ENCODE measurements at regions of chr1 and their contacts with region 1.

Region 1: DNA sequence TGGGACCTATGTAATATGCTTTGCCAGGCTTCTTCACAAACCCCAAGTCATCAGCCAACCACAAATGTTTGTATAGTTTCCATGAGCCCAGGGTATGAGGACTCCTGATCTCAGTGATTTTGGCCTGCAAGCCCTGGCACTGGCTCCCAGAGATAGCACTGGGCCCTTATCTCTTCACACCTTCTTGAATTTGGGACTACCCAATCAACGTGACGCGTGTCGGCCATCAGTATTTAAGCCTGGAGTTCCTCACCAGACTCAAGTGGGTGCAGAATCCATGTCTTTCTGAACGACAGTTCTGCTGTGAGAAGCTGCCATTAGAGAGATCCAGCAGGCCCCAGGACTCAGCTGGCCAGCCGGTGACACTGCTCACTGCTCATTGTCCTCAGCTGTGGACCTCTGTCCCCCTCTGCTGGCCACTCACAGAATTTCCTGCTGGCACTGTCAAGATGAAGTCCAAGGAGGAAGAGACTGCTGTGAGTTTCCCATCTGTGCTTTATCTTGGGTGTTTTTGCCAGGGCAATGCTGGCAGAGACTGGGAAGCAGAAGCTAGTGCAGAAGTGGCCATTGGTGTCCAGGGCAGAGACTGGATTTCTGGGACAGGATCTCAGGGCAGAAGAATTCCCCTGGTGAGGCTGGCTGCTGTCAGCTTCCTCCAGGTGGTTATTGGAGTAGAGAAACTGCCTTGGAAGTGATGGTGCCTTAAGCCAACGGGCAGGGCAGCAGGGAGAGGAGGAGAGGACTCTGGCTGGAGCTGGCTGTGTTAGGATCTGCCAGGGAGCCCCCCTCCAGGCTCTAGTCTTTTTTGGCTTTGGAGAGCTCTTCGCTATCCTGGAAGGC is 28.4 kb downstream of the TMCC2 start:
- DNase-seq: peak; percentile 74
- H3K4me3 Mint-ChIP-seq: no peak overlapping the region
- H3K27ac Mint-ChIP-seq: no peak overlapping the region
- H3K4me1 Mint-ChIP-seq: peaks cover 25% of the 10 kb centered on the region
- H3K27me3 Mint-ChIP-seq: no peaks in the 10 kb centered on the region

Region 2: GRCh38 chr1:204975570-204976235 is 280.5 kb before region 1 on chr1:
- intact Hi-C with region 1: loop called (anchors 1 kb)
- DNase-seq: peak; percentile 9
- H3K4me3 Mint-ChIP-seq: no peak overlapping the region
- H3K27ac Mint-ChIP-seq: no peak overlapping the region
- H3K4me1 Mint-ChIP-seq: no peaks in the 10 kb centered on the region
- H3K27me3 Mint-ChIP-seq: peaks cover 14% of the 10 kb centered on the region

Region 3: DNA sequence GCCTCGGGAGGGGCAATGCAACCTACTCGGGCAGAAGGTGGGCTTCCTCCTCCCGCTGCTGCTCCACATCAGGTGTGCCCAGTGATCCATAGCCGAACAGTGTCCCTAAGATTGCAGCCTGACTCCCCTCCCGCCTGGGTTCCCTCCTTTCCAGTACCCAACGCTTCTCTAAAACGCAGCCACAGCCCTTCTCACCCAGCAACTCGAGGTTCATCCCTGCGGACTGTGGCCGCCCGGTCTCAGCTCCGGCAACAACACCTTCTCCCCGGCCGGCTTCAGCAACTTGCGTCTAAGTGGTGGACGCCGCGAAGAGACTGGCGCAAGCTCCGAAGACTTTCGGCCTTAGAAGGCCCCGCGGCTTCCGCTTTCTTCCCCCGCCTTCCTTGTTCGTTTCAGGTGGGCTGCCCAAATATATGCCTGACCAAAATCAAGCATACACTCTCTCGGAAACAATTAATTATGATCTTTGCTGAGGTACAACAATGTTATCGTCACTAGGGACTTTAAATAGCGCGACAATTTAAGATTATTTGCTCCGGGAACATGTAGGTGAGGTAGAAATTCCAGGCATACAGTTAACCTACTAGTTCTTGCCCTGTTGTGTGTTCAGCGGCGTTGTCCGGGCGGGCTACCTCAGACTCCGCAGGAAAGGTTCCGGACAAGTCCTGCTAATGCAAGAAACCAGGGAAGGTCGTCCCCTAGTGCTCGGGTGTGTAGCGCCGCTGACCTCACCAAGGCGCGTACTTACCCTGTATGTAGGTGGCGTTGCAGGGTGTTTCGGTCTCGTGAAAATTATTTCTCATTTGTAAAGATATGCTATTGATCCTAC is 134.3 kb before region 1 on chr1 and contains the start of gene RBBP5:
- intact Hi-C with region 1: loop called (anchors 1 kb)
- DNase-seq: peak; percentile 92
- H3K4me3 Mint-ChIP-seq: peak within 1 kb of the TSS; percentile 98
- H3K27ac Mint-ChIP-seq: peak within 1 kb of the TSS; percentile 98
- H3K4me1 Mint-ChIP-seq: peaks cover 39% of the 10 kb centered on the region
- H3K27me3 Mint-ChIP-seq: no peaks in the 10 kb centered on the region
- total RNA-seq, gene RBBP5: 21.5 and 24.7 TPM in 2 replicates

Region 4: GRCh38 chr1:205172729-205173366 is 83.3 kb before region 1 on chr1:
- intact Hi-C with region 1: loop called (anchors 1 kb)
- DNase-seq: no peak
- H3K4me3 Mint-ChIP-seq: peak overlapping the region; percentile 45
- H3K27ac Mint-ChIP-seq: peak overlapping the region; percentile 81
- H3K4me1 Mint-ChIP-seq: peaks cover 37% of the 10 kb centered on the region
- H3K27me3 Mint-ChIP-seq: no peaks in the 10 kb centered on the region

Region 5: GRCh38 chr1:205310976-205311704 is 55.0 kb after region 1 on chr1:
- intact Hi-C with region 1: no loop called
- DNase-seq: no peak
- H3K4me3 Mint-ChIP-seq: no peak overlapping the region
- H3K27ac Mint-ChIP-seq: no peak overlapping the region
- H3K4me1 Mint-ChIP-seq: peaks cover 60% of the 10 kb centered on the region
- H3K27me3 Mint-ChIP-seq: no peaks in the 10 kb centered on the region

Region 6: DNA sequence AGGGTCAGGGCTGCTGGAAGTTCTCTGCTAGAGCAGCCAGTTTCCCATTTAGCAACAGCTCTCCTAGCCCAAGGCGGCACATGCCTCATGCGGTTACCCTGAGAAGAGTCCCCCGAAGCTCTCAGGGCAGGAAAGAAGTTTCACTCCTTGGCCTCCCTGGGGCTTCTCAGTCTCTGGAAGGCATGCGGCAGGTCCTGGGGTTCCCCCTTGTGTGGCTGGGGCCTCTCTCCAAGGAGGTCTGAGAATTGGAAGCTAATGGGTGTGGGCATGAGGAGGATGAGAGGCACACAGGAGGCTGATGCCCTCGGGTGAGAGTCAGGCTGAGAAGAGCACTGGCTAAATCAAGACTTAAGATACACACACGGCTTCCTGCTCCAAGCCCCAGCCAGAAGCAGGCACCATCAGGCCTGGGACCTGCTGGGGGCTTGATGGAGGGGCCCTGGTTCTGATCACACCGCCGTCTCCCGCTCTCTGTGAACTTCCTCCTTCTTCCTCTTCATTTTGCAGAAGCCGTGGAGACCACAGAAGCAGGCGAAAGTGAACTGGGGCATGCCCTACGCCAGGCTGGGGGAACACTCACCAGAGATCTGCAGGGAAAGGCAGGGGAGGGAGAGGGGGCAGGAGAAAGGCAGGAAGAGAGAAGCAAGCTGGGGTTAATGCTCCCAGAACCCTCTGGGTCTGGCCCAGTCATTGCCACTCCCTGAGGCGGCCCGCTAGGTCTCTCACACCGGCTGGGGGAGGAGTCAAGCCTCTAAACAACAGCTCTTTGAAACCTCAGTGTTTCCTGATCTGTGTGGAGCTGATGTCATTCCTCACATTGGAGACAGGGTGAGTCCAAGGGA is 184.5 kb after region 1 on chr1:
- intact Hi-C with region 1: loop called (anchors 10 kb)
- DNase-seq: peak; percentile 66
- H3K4me3 Mint-ChIP-seq: peak overlapping the region; percentile 63
- H3K27ac Mint-ChIP-seq: peak overlapping the region; percentile 83
- H3K4me1 Mint-ChIP-seq: peaks cover 15% of the 10 kb centered on the region
- H3K27me3 Mint-ChIP-seq: peaks cover 10% of the 10 kb centered on the region